ENCODE measurements at regions of chr11 and their contacts with region 1.

Region 1: DNA sequence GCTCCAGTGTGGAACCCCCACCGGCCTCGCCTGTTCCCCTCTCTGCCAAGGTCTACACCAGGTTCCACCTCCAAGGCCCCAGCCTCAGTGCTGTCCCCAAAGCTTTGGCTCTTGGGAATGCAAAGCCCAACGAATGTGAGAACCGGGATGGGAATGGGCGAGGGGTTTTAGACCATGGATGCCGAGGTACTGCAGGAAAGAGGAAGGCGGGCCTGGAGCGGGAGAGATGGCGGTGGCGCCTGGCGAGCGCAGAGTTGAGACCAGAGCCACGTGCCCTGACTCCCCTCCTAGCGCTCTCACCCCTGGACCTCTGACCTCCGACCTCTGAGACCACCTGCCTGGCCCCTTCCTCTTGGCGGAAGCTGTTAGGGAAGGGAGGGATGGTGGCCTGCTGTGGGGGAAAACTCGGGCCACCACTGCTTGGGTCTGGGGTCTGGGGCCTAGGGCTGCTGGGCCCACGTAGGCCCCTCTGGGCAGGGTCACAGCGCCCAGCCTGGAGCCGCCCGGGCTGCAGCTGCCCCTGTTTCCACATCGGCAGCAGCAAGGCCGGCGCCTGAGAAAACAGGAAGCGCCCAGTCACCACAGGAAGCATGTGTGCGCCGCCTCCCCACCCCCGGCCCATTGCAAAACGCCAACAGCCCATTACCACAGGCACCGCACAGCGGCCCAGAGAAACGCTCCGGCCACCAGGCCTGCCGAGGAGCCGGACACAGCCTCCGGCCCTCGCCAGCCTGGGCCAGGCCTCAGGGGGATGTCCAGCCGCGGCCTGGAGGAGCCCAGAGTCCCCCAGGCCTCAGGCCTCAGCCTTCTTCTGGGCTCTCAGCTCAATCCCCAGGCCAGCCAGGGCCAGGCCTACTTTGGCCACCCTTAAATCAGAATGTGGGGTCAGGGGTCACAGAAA is 13.8 kb upstream of the SLC39A13 start:
- H3K4me3 Mint-ChIP-seq: peak overlapping the region; percentile 77
- H3K27ac Mint-ChIP-seq: peak overlapping the region; percentile 100
- H3K4me1 Mint-ChIP-seq: peaks cover 83% of the 10 kb centered on the region
- H3K27me3 Mint-ChIP-seq: no peaks in the 10 kb centered on the region

Region 2: DNA sequence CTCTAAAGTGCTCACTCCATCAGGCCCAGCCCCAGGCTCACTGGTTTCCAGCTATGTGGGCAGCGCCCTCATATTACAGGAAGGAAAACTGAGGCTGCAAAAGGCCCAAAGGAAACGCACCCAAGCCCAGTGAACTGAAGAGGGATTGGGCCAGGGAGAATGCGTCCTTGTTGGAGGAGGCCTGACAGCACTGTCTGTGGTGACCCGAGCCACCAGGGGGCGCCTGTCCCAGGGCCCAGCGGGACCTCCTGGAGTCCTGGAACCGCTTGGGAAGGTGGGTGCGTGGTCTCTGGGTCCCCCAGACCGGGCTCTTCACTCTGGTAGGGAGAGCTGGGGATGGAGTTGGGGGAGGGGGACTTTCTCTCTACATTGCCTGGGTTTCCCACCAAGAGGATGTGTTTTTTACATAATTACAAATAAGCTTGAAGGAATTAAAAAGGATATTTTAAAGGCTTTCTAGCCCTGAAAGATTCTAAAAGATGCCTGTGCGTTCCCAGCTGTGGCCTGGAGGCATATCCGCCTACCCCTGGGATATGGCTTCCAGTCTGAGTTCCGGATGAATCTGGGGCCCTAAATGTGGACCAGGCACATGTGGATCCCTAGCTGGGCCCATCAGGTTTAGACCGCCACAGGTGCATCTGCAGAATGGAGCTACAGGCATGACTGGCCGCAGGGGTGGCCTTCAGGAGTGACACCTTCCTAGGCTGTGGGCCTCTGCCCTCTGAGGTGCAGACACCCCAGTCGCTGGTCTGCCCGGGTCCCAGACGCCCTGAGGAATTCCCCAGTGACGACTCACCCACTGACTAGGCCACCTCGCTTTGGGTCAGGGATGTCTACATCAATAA is 20.5 kb before region 1 on chr11:
- intact Hi-C with region 1: loop called (anchors 2 kb)
- H3K4me3 Mint-ChIP-seq: no peak overlapping the region
- H3K27ac Mint-ChIP-seq: no peak overlapping the region
- H3K4me1 Mint-ChIP-seq: peaks cover 70% of the 10 kb centered on the region
- H3K27me3 Mint-ChIP-seq: no peaks in the 10 kb centered on the region

Measured in dendritic cell treated with granulocyte-macrophage colony-stimulating factor and Interleukin-4, amounts not matched to agents 40 ng/mL and 50 ng/mL, for 4 days (primary cell).